Sigmoid colon (tissue), 7 donors: ENCODE measurements at regions of chr12 and their contacts with region 1.

Region 1: DNA sequence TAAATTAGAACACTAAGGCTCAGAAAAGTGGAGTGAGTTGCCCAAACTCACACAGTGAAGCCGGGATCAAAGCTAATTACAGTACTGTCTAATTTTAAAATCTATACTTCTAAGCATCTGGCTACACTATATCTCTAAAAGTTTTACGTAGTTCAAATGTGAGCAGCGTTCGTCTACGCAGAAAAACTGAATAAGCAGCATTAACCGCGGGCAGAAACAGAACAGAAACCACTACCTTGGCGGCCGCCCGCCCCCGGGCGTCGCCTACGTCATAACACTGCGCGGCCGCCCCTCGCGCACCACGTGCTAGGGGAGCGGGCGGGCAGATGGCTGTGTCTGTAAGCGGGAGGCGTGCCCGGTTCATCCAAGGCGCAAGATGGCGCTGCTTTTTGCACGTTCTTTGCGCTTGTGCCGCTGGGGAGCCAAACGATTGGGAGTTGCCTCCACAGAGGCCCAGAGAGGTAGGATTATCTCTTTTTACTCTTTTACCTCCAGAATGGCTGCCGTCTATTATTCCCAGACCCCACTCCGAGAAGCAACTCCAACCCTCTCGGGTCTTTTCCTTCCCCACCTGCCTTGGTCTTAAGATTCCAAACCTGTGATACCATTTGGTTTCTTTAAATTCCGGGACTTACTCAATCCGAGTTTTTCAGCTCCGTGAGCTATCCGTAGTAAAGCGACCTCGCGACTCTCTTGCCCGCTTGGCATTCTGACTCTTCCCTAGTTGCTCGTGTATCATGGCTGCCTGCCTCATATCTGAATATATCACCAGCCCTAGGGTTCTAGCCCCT is at the start of gene SPRYD4:
- DNase-seq: peak; percentile 97
- H3K4me3 ChIP-seq: peak within 1 kb of the TSS; percentile 64 to 80 (median 74)
- H3K27ac ChIP-seq: peak within 1 kb of the TSS; percentile 84 to 90 (median 86)
- H3K4me1 ChIP-seq: peaks cover 0 to 22% (median 17%) of the 10 kb centered on the region in 4 donors
- H3K27me3 ChIP-seq: no peaks in the 10 kb centered on the region
- CTCF ChIP-seq: peak in 1 of 4 experiments; percentile 9
- EP300 ChIP-seq: peak in 2 of 4 donors; percentile 40 to 46
- POLR2A ChIP-seq: peak; percentile 88 to 91
- total RNA-seq, gene SPRYD4: 1.7 to 3.1 (median 2.3) TPM

Region 2: GRCh38 chr12:56127888-56128669 is 340.3 kb before region 1 on chr12 and contains the start of gene ESYT1:
- intact Hi-C with region 1: loop called (anchors 10 kb)
- DNase-seq: peak; percentile 100
- H3K4me3 ChIP-seq: peak within 1 kb of the TSS; percentile 76 to 83 (median 80)
- H3K27ac ChIP-seq: peak within 1 kb of the TSS; percentile 95 to 98 (median 96)
- H3K4me1 ChIP-seq: peaks cover 0 to 46% (median 32%) of the 10 kb centered on the region in 4 donors
- H3K27me3 ChIP-seq: no peaks in the 10 kb centered on the region
- CTCF ChIP-seq: no peak
- EP300 ChIP-seq: no peak
- POLR2A ChIP-seq: peak; percentile 97 to 98
- total RNA-seq, gene ESYT1: 67.6 to 102 (median 88.7) TPM

Region 3: DNA sequence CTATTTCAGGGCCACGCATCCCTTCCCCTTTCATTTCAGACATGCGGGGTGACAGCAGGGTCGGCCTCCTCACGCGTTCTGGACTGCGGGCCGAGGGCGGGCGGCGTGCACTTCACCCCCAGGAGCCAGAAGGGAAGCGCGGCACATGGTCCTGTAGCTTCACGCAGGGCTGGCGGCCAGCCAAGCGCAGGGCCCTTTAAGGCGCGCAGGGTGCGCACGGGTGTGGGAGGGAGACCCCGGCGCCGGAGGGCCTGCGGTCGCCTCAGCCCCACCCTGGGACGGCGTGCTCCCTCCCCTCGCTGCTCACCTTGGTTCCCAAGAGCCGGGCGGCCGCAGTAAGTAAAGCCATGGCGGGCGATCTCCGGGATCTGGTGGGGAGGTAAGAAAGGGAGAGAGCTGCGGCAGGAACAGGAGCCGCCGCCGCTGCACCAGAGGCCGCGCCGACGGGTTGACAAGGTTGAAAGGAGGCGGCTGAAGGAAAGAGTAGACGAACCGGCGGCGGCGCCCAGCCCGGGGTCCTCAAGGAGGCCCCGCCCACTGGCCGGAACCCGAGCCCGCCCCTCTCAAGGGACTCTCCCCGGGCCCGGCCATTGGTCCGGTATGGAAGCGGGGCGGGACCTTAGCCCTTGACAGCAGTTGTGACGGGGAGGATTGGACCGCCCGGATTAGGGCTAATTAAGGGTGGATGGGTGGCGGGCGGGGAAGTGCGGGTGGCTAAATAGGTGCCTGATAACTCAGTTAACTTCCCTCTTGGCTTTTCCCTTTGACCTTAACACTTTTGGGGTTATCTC is 168.4 kb before region 1 on chr12 and contains the start of gene CS:
- intact Hi-C with region 1: no loop called
- DNase-seq: peak; percentile 100
- H3K4me3 ChIP-seq: peak within 1 kb of the TSS; percentile 67 to 95 (median 91)
- H3K27ac ChIP-seq: peak within 1 kb of the TSS; percentile 91 to 98 (median 95)
- H3K4me1 ChIP-seq: peaks cover 0 to 68% (median 46%) of the 10 kb centered on the region in 4 donors
- H3K27me3 ChIP-seq: no peaks in the 10 kb centered on the region
- CTCF ChIP-seq: no peak
- EP300 ChIP-seq: no peak
- POLR2A ChIP-seq: peak; percentile 49 to 82
- total RNA-seq, gene CS: 75.9 to 130 (median 99.6) TPM

Region 4: DNA sequence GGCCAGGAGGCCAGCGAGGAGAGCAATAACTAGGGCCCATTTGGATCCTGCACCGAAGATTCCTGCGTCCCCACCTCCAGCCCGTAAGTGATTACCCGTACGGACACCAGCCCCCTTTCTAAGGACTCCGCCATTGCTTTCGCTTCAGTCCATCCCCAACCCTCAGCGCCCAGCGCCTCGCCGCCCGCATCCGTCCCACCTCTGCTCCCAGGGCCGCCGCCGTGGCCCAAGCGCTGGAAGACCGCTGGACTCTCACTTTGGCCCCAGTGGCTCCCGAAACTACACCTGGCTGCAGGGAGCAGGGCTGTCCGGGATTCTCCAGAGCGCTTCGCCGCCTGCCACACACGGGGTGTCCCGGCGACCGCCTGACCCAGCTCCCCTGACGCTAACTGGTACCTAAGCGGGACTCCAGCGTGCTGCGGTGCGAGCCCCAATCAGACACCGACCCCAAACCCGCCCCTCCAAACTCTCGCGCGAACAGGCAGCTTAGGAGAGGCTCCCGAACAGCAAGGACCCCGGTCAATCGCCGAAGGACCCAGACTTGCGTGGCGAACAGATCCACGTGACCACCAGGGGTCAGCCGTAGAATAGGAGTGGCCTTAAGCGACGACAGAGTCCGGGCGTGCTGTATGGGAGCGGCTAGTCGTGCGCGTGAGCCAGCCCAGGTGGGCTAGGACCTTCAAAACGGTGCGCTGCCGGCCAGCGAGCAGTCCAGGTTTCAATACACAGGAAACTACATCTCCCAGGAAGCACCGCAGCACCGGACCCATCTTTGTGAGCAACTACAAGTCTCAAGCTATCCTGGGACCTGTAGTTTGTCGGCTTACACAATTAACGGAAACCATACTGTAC is 152.6 kb before region 1 on chr12 and contains the start of gene CNPY2:
- intact Hi-C with region 1: loop called (anchors 5 kb)
- DNase-seq: peak; percentile 98
- H3K4me3 ChIP-seq: peak within 1 kb of the TSS; percentile 87 to 98 (median 90)
- H3K27ac ChIP-seq: peak within 1 kb of the TSS; percentile 93 to 95 (median 94)
- H3K4me1 ChIP-seq: peaks cover 0 to 22% (median 18%) of the 10 kb centered on the region in 4 donors
- H3K27me3 ChIP-seq: no peaks in the 10 kb centered on the region
- CTCF ChIP-seq: no peak
- EP300 ChIP-seq: no peak
- POLR2A ChIP-seq: peak; percentile 67 to 68
- total RNA-seq, gene CNPY2: 48.7 to 77.1 (median 67.9) TPM

Region 5: DNA sequence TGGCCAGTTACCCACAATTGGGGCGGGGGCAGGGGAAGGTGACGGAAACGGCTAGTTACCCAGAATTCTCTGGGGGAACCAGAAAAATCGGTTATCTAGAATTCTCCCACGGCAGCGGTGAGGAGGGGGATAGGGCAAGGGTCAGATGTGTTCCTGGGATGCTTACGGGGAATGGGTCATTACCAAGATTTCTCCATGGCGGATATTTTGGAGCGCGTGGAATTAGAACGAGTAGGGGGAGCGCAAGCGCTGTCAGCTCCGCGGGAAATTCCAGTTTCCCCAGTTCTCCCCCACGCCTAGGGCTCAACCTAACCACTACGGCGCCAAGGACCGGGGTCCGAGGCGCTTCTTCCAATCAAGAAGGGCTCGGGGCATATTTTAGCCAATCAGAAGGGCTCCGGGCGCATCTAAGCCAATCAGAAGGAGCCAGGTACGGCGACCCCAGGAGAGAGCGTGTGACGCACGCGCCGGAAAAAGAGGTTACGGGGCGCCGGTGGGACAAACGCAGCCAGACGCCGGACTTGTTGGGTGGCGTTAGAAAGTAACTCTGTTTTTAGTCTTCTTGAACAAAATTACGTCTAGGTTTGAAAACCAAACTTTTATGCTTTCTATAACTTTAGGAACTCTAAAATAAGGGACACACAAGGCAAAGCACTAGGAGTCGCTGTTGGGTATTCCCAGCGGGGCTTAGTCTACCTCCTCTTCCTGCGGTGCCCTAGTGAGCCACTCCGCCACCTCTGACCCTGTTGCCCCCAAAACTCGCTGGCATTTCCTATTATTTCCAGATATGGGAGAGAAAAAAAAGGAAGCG is 134.5 kb before region 1 on chr12 and contains the start of gene PAN2:
- intact Hi-C with region 1: loop called (anchors 5 kb)
- DNase-seq: peak; percentile 99
- H3K4me3 ChIP-seq: peak within 1 kb of the TSS; percentile 38 to 71 (median 62)
- H3K27ac ChIP-seq: peak within 1 kb of the TSS; percentile 88 to 96 (median 94)
- H3K4me1 ChIP-seq: peaks cover 0 to 22% (median 12%) of the 10 kb centered on the region in 4 donors
- H3K27me3 ChIP-seq: no peaks in the 10 kb centered on the region
- CTCF ChIP-seq: peak; percentile 40 to 55 (median 45)
- EP300 ChIP-seq: peak in 1 of 4 donors; percentile 5
- POLR2A ChIP-seq: peak; percentile 71 to 84
- total RNA-seq, gene PAN2: 26.4 to 67.0 (median 36.8) TPM

Region 6: GRCh38 chr12:56359851-56360767 is 108.3 kb before region 1 on chr12 and contains the start of gene STAT2:
- intact Hi-C with region 1: loop called (anchors 2 kb)
- DNase-seq: peak; percentile 99
- H3K4me3 ChIP-seq: peak within 1 kb of the TSS; percentile 64 to 91 (median 78)
- H3K27ac ChIP-seq: peak within 1 kb of the TSS; percentile 88 to 92 (median 90)
- H3K4me1 ChIP-seq: peaks cover 0 to 23% (median 18%) of the 10 kb centered on the region in 4 donors
- H3K27me3 ChIP-seq: no peaks in the 10 kb centered on the region
- CTCF ChIP-seq: peak in 1 of 4 experiments; percentile 13
- EP300 ChIP-seq: peak in 2 of 4 donors; percentile 23 to 57
- POLR2A ChIP-seq: peak; percentile 61 to 82
- total RNA-seq, gene STAT2: 73.6 to 160 (median 94.6) TPM